HAP-1 (cell line): ENCODE measurements at regions of chr7 and their contacts with region 1.

Region 1: GRCh38 chr7:135558337-135558767 is 635 bp downstream of the NUP205 start:
- DNase-seq: peak; percentile 72 to 79
- H3K4me3 ChIP-seq: peak overlapping the region; percentile 66
- H3K4me1 ChIP-seq: peaks cover 21% of the 10 kb centered on the region
- H3K27me3 ChIP-seq: no peaks in the 10 kb centered on the region

Region 2: DNA sequence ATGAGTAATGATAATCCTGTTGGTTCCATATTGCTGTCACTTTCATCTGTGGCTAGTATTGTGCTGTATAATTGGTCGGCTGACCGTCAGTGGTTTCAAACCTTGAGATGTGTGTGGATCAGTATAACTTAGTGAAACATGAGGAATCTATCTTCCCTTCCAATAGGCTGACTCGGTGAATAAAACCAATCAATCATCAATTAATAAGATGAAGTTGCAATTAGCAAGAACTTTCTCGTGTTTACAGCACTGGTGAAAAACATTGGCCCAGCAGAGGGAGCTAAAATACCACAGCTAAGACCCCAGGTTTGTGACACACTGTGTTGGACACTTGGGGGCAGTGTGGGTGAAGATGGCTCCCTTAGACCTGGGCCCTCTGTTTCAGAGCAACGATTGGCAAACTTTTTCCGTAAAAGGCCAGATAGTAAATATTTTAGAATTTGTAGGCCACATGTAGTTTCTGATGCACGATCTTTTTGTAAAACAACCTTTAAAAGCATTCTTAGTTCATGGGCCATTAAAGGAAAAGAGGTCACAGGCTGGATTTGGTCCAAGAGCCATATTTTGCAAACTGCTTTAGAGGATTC is 276.9 kb before region 1 on chr7:
- in situ Hi-C with region 1: loop called (anchors 25 kb)
- DNase-seq: peak; percentile 81 to 91
- H3K4me3 ChIP-seq: no peak overlapping the region
- H3K4me1 ChIP-seq: no peaks in the 10 kb centered on the region
- H3K27me3 ChIP-seq: no peaks in the 10 kb centered on the region

Region 3: DNA sequence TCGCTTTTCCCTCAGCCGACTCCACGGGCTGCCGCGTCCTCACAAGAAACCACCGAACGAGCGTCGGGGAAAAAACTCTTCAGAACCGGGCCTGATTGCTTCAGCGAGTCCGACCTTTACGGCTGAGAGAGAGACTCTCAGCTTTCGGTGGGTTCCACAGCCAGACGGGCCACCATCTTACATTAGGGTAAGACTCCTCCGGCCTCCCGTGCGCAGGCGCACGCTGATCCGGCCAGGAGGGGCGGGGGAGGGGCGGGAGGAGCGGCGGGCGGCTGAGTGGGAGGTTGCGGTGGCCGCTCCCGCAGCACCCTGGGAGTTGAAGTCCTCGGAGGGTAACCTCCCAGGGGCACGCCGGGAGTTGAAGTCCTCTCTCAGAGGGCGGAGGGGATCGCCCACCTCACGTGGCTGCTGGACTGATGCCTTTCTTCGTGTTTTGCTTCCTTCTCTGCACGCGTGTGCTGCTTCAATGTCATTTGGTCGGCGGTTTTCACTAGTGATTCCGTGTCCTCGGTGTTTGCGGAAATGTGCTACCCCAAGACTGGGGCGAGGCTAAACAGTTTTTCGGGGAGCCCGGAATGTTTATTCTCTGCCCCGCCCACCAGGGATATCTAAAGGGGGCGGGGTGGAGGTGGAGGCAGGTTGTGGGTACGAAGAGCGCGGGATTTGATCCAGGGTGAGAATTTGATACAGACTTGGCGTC is 48.3 kb before region 1 on chr7 and contains the start of gene CNOT4:
- in situ Hi-C with region 1: loop called (anchors 5 kb)
- DNase-seq: peak; percentile 97
- H3K4me3 ChIP-seq: peak within 1 kb of the TSS; percentile 97
- H3K4me1 ChIP-seq: peaks cover 17% of the 10 kb centered on the region
- H3K27me3 ChIP-seq: no peaks in the 10 kb centered on the region

Region 4: DNA sequence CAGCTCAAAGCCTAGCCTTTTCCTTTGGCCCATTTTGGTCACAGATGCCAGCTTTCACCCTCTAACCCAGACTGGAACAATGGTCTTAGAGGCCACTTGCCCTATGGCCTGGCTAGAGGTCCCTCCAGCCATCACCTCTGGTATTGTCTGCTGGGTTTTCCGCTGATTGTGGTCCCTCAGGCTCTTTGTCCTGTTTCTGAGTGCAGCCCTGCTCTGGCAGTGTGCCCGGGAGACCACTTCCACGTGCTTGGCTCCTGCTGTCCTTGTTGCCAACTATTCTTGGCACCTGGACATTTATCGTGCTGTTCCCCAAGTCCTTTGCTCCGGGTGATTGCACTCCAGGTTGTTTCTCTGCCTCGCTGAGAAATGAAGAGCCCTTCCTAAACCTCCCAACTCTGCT is 243.5 kb after region 1 on chr7:
- in situ Hi-C with region 1: no loop called
- DNase-seq: no peak
- H3K4me3 ChIP-seq: no peak overlapping the region
- H3K4me1 ChIP-seq: no peaks in the 10 kb centered on the region
- H3K27me3 ChIP-seq: no peaks in the 10 kb centered on the region